BJ (cell line): ENCODE measurements at regions of chr9 and their contacts with region 1.

Region 1: GRCh38 chr9:110183208-110184145 is 24.5 kb downstream of the C9orf152 start:
- DNase-seq: no peak
- H3K4me3 ChIP-seq: no peak overlapping the region
- H3K27me3 ChIP-seq: no peaks in the 10 kb centered on the region
- CTCF ChIP-seq: peak; percentile 73

Region 2: DNA sequence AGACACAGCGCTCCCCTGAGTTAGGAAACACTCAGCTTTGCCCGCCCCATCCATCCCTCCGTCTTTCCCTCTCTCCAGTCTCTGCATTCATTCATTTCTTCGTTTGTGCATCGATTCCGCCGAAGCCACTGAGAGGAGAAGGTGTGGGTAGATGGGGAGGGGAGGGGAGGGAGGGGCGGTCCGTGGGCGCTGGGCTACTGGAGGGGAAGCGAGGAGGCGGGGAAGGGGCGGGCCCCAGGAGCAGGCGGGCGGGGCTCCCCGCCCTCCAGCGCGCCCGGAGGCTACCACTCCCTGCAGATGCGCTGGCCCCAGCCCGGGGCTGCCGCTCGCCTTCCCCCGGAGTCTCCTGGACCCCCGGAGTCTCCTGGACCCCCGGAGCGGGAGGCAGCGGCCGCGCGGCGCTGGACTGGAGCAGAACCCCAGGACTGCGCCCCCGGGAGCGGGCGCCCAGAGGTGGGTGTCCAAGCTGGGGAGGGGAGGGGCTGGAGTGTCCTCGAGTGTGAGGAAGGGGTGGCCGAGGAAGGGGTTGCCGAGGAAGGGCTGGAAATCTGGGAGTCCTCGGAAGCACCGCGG is 135.0 kb before region 1 on chr9:
- CTCF ChIA-PET with region 1: no interaction called
- POLR2A ChIA-PET with region 1: no interaction called
- DNase-seq: no peak
- H3K4me3 ChIP-seq: peak overlapping the region; percentile 93
- H3K27me3 ChIP-seq: no peaks in the 10 kb centered on the region
- CTCF ChIP-seq: no peak

Region 3: DNA sequence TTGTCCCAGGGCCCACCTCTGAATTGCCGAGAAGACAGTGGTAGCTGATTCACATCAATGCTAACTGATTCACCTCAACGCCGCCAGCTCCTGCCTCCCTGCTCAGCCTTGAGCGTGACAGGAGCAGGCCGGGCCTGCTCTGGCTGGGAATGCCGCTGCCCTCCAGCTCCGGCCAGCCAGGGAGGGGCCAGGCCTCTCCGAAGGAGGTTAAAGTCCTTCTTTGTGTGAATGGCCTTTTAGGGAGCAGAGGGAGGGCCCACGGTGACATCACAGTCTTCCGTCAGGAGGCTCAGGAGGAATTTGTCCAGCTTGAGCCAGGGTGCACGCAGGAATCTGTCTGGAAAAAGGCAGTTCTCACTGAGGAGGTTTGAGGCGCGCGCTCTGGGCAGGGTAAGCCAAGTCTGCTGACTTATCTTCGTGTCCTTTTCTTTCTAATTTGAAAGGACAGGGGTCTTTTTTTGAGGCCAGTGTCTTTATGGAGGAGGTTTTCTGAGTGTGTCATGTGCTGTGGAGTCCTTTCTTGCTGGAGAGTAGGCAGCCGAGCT is 58.2 kb before region 1 on chr9:
- CTCF ChIA-PET with region 1: no interaction called
- POLR2A ChIA-PET with region 1: no interaction called
- DNase-seq: peak; percentile 96
- H3K4me3 ChIP-seq: peak overlapping the region; percentile 27
- H3K27me3 ChIP-seq: no peaks in the 10 kb centered on the region
- CTCF ChIP-seq: no peak

Region 4: DNA sequence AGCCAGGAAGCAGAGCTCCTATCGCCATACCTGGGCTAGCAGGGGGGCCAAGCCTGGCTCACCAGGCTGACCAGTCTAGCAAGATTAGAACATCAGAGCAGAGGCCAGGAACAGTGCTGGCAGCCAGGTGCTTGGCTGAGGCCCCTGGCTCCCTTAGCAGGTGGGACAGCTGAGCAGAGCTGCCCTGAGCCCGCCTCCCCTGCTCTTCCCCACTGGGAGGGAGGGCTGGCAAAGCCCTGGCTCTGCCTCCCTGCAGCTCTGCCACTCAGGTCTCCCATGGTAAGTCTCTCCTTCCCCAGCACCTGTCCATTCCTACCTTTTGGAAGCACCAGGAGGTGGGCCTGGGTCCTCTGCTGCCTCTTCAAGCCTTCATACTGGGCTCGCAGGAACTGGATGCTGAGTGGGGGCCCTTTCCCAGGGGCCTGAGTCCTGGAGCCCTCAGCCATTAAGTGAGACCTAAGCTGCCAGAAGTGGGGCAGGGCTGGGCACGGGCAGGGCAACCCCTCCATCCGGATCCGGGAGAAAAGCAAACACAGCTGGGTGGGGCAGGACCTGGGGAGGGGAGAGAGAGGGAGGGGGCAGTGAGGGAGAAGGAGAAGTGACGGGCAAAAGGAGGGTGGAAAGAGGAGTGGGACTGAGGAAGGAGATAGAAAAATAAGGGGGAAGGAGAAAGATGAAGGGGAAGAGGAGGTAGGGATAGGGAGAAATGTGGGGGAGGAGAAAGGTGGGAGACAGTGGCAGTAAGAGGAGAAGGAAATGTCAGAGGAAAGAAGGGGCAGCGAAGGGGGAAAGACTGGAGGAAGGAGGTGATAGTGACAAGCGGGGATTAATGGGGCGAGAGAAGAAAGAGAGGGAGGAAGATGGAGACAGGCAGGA is 23.8 kb after region 1 on chr9:
- CTCF ChIA-PET with region 1: interaction called, 12 read pairs
- POLR2A ChIA-PET with region 1: no interaction called
- DNase-seq: no peak
- H3K4me3 ChIP-seq: no peak overlapping the region
- H3K27me3 ChIP-seq: peaks cover 6% of the 10 kb centered on the region
- CTCF ChIP-seq: no peak

Region 5: DNA sequence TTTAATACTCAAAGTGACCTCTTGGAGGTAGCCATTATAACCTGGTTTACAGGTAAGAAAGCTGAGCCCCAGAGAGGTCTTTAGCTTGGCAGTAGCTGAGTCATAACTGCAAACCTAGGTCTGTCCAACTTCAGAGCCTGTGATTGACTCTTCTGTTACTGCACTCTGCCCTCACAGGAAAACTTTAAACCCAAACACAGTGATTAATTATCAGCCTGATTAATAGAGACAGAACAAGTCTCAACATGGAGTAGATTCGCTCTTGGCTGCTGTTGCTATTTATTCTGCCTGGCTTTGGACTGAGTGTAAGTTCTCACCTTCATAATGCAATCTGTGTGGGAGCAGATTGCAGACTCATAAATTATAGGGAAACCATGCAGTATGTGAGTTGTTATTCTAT is 100.3 kb after region 1 on chr9:
- CTCF ChIA-PET with region 1: no interaction called
- POLR2A ChIA-PET with region 1: no interaction called
- DNase-seq: no peak
- H3K4me3 ChIP-seq: no peak overlapping the region
- H3K27me3 ChIP-seq: no peaks in the 10 kb centered on the region
- CTCF ChIP-seq: no peak